ENCODE measurements at regions of chr4 and their contacts with region 1.

Region 1: GRCh38 chr4:76504613-76505465 is 69.8 kb downstream of the SHROOM3 start:
- DNase-seq: peak; percentile 44
- H3K4me3 ChIP-seq: no peak overlapping the region; a peak in 1 of 4 replicates
- H3K27ac ChIP-seq: no peak overlapping the region
- H3K4me1 ChIP-seq: no peaks in the 10 kb centered on the region
- H3K27me3 ChIP-seq: no peaks in the 10 kb centered on the region; the same call in 1 of the 2 replicates
- CTCF ChIP-seq: peak; percentile 83
- EP300 ChIP-seq: no peak
- RAD21 ChIP-seq: peak; percentile 79

Region 2: GRCh38 chr4:76326515-76326914 is 178.3 kb before region 1 on chr4:
- CTCF ChIA-PET with region 1: no interaction called
- POLR2A ChIA-PET with region 1: no interaction called
- DNase-seq: no peak
- H3K4me3 ChIP-seq: no peak overlapping the region
- H3K27ac ChIP-seq: no peak overlapping the region
- H3K4me1 ChIP-seq: no peaks in the 10 kb centered on the region
- H3K27me3 ChIP-seq: no peaks in the 10 kb centered on the region
- CTCF ChIP-seq: no peak
- EP300 ChIP-seq: no peak
- RAD21 ChIP-seq: no peak

Region 3: DNA sequence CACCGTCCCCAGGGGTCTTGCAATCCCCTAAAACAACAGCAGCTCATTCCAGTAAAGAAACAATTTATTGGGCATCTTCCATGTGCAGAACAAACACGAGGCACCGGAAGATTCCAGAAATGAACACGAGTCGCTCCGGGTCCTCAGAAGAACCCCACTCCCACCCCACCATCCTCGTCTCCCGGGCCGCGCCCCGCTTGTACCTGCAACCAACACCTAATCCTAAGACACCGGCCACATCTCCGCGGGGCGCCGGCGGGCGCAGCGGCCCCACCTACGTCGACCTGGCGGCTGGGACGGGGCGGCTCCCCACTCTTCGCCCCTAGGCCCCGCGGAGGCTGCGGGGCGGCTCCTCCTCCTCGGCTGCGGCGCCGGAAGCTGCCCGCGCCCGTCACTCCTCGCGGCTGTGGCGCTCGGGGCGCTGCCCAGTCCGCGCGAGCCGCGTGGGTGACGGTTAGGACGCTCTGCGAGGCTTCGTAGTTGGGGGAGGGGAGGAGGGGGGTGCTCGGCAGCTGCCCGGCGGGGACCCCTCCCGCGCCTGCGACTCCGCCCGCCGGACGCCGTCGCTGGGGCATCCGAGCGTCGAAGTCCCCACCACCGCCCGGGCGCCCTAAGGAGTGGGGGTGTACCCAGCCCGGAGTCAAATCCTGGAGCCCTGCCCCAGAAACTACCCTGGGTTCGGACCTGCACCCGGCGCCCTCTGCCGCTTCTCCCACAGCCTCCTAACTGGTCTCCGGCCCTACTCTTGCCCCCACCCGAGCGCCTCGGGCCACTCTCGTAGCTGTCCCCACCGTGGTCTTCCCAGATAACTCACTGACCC is 83.9 kb before region 1 on chr4 and contains the start of gene CCDC158:
- CTCF ChIA-PET with region 1: interaction called, 13 read pairs
- POLR2A ChIA-PET with region 1: no interaction called
- DNase-seq: peak; percentile 82
- H3K4me3 ChIP-seq: peak within 1 kb of the TSS; percentile 32 to 50; a peak in 2 of 4 replicates
- H3K27ac ChIP-seq: no peak within 1 kb of the TSS
- H3K4me1 ChIP-seq: peaks cover 0 to 6% of the 10 kb centered on the region in 2 experiments; a peak in 1 of 4 replicates
- H3K27me3 ChIP-seq: no peaks in the 10 kb centered on the region
- CTCF ChIP-seq: no peak
- EP300 ChIP-seq: no peak
- RAD21 ChIP-seq: no peak
- polyA plus RNA-seq, gene CCDC158: not detected in 2 replicates

Region 4: GRCh38 chr4:76430519-76431388 is 74.1 kb before region 1 on chr4:
- CTCF ChIA-PET with region 1: interaction called, 192 read pairs
- POLR2A ChIA-PET with region 1: no interaction called
- DNase-seq: peak; percentile 67
- H3K4me3 ChIP-seq: peak overlapping the region in 1 of 2 experiments; percentile 40; a peak in 1 of 4 replicates
- H3K27ac ChIP-seq: no peak overlapping the region
- H3K4me1 ChIP-seq: no peaks in the 10 kb centered on the region
- H3K27me3 ChIP-seq: no peaks in the 10 kb centered on the region
- CTCF ChIP-seq: peak; percentile 94
- EP300 ChIP-seq: no peak
- RAD21 ChIP-seq: peak; percentile 83

Region 5: DNA sequence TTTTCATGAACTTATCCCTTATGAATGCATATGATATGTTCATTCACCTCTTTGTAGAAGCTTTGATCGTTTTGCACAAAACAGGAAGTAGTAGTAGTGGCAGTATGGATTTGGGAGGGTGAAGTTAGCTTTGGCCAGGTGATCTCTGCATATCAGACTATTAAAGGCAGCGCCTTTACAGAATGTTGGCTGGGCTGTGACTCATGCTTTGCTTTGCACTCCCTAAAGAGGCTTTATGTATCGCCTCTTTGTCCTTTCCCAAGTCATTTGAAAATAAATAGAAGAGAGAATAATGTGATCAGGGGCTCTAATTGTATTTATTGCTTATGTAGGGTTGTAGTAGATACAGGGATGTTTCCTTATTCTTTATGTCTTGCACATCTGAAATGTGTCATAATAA is 19.4 kb before region 1 on chr4:
- CTCF ChIA-PET with region 1: interaction called, 35 read pairs
- POLR2A ChIA-PET with region 1: no interaction called
- DNase-seq: no peak
- H3K4me3 ChIP-seq: no peak overlapping the region
- H3K27ac ChIP-seq: no peak overlapping the region
- H3K4me1 ChIP-seq: no peaks in the 10 kb centered on the region
- H3K27me3 ChIP-seq: no peaks in the 10 kb centered on the region
- CTCF ChIP-seq: no peak
- EP300 ChIP-seq: no peak
- RAD21 ChIP-seq: no peak

Region 6: DNA sequence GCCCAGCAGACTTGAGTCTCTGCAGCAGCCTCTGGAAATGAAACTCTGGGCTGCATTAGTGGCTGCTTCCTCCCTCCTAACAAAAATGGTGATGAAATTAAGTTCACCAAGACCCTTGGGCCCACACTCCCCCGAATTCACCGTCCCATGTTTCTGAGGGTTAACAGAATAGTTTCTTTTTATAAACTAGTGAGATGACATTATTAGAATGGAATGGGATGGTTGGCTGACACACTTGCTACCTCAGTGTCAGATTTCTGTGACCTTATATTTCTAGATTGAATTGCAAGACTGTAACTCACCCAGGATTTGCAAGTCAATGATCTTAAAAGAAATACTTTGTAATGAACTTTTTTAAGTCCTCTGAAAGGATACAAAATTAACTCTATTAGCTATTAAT is 57.3 kb after region 1 on chr4:
- CTCF ChIA-PET with region 1: no interaction called
- POLR2A ChIA-PET with region 1: no interaction called
- DNase-seq: no peak
- H3K4me3 ChIP-seq: no peak overlapping the region
- H3K27ac ChIP-seq: peak overlapping the region; percentile 76 to 82; a peak in 3 of 4 replicates
- H3K4me1 ChIP-seq: peaks cover 0 to 27% of the 10 kb centered on the region in 2 experiments; a peak in 3 of 4 replicates
- H3K27me3 ChIP-seq: no peaks in the 10 kb centered on the region
- CTCF ChIP-seq: no peak
- EP300 ChIP-seq: peak in 1 of 2 experiments; percentile 66; a peak in 1 of 4 replicates
- RAD21 ChIP-seq: no peak